ENCODE measurements at regions of chr5 and their contacts with region 1.

Region 1: GRCh38 chr5:79235634-79236363 is at the start of gene JMY:
- DNase-seq: peak; percentile 94
- H3K4me3 ChIP-seq: peak within 1 kb of the TSS; percentile 65 to 85 (median 74)
- H3K27ac ChIP-seq: peak within 1 kb of the TSS; percentile 85 to 96 (median 93)
- H3K4me1 ChIP-seq: peaks cover 0 to 37% (median 20%) of the 10 kb centered on the region in 4 donors
- H3K27me3 ChIP-seq: no peaks in the 10 kb centered on the region
- CTCF ChIP-seq: no peak
- EP300 ChIP-seq: peak in 2 of 4 donors; percentile 6 to 32
- POLR2A ChIP-seq: peak; percentile 21 to 42
- total RNA-seq, gene JMY: 33.2 to 58.7 (median 39.2) TPM

Region 2: DNA sequence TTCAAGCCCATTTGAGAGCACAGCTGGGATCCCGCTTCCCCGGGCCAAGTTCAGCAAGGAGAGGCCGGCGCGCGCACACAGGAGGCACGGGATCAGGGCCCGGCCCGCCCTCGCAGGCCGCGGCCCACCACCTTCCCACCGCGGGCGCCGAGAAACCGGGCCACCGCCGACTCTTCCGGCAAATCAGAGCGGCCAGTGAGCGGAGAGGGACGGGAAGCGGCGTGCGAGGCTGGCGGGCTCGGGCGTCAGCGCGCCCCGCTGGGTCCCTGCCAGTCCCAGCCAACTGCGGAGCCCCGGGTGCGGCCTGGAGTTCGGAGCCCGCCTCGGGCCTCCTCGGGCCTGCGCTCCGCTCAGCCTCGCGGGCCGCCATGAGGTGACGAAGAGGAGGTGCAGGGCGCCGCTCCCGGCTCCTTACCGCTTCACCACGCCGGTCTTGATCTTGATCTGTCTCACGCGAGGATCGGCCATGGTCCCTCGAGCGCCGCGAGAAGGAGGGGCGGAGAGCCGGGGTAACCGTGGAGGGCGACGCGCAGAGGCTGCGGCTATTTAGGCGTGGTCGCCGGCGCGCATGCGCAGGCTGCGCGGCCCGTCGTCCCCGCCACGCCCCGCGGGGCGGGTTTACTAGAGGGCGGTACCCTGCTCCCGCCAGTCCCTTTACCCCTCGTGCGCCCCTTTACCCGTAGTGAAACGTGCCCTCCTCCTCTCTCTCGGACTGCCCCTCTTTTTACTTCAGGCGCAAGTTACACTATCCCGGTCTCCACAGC is 1459.8 kb before region 1 on chr5 and contains the start of gene TBCA:
- intact Hi-C with region 1: loop called (anchors 10 kb)
- DNase-seq: peak; percentile 93
- H3K4me3 ChIP-seq: peak within 1 kb of the TSS; percentile 56 to 75 (median 71)
- H3K27ac ChIP-seq: peak within 1 kb of the TSS; percentile 94 to 98 (median 96)
- H3K4me1 ChIP-seq: peaks cover 0 to 49% (median 38%) of the 10 kb centered on the region in 4 donors
- H3K27me3 ChIP-seq: no peaks in the 10 kb centered on the region
- CTCF ChIP-seq: peak in 2 of 4 experiments; percentile 20 to 26
- EP300 ChIP-seq: no peak
- POLR2A ChIP-seq: peak; percentile 77 to 80
- total RNA-seq, gene TBCA: 192 to 231 (median 214) TPM

Region 3: DNA sequence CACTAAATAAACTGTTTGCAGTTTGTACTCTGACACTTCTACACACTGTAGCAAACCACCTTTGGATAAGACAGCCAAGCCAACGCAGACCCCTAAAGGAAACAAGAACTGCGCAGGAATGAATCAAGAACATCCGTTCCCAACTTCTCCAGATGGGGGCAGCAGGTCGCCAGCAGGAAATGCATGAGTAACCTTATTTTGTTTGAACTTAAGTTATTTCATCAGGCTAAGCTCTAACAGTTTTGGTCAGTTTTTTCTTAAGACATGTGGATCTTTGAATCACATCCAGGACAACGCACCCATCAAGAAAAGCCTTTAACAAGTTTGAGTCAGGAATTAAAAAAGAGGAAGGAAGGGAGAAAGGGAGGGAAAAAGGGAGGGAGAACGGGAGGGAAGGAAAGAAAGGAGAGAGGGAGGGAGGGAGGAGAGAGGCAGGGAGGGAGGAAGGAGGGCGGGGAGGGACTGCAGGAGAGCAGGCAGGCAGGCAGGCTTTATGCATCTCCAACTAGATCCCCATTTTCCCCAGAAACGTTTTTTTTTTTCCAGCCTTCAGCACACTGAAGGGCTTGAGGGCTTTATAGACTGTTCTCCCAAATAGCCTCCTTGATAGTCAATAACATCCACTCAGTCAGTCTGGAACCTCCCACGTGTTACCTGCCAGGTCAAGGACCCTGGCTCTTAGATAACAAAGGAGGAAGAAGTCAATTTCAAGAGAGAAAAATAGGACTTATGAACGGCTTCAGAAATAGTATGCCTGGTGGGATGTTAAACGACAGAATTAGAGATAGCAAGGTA is 101.9 kb before region 1 on chr5:
- intact Hi-C with region 1: loop called (anchors 2 kb)
- DNase-seq: peak; percentile 86
- H3K4me3 ChIP-seq: peak overlapping the region; percentile 9 to 42 (median 33)
- H3K27ac ChIP-seq: peak overlapping the region; percentile 68 to 85 (median 83)
- H3K4me1 ChIP-seq: peaks cover 0 to 21% (median 6%) of the 10 kb centered on the region in 4 donors
- H3K27me3 ChIP-seq: no peaks in the 10 kb centered on the region
- CTCF ChIP-seq: peak; percentile 69 to 85 (median 76)
- EP300 ChIP-seq: no peak
- POLR2A ChIP-seq: no peak

Region 4: DNA sequence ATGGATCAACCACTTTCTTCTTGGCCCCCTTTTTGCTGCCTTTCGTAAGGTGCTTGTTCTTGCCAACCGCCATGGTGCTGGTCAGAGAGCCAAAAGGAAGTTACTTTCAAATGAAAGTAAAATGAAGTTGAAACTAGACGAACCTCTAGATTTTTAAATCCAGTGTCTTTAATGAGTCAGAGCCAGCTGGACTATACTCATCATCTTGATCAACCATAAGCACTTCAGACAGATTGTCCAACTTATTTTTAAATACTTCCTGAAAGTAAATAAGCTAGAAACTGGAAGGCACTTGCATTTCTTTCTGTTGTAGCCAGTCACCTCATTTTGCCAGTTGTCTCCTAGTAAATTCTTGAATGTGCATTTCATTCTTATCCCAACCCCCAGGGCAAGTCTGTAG is 49.0 kb after region 1 on chr5:
- intact Hi-C with region 1: loop called (anchors 5 kb)
- DNase-seq: no peak
- H3K4me3 ChIP-seq: no peak overlapping the region
- H3K27ac ChIP-seq: peak overlapping the region in 3 of 4 donors; percentile 34 to 57 (median 40)
- H3K4me1 ChIP-seq: peaks cover 0 to 43% (median 2%) of the 10 kb centered on the region in 4 donors
- H3K27me3 ChIP-seq: no peaks in the 10 kb centered on the region
- CTCF ChIP-seq: no peak
- EP300 ChIP-seq: no peak
- POLR2A ChIP-seq: no peak

Region 5: DNA sequence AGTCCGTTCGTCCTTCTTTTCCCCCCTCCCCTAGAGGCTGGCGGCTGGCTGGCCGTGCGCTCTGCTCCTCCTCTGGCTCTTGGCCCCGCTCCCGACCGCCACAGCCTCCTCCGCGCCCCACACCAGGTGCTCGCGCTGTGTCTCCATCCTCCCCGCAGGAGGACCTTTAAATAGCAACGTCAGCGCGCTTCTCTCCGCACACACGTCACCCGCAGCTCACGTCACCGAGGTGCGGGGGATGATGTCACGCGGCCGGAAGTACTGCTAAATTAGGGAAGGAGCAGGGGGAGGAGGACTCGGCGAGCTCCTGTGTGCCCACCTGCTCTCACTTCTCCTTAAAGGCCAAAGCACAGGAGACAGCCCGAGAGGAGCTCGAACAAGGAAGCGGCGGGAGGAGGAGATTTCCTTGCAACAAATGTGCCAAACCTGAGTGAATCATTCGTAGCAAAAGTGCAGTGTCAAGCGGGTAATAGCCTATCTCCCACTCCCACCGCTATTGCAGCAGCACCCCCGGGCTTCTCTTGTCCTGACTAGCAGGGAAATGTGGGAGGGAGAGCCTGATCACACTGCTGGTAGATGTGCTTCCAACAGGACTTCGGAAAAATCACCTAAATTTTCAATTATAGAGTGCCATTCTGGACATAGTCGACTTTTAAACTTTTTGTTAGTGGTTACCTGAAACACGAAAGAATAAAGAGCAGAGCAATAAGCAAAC is 278.7 kb after region 1 on chr5:
- intact Hi-C with region 1: loop called (anchors 2 kb)
- DNase-seq: peak; percentile 97
- H3K4me3 ChIP-seq: peak overlapping the region; percentile 79 to 99 (median 91)
- H3K27ac ChIP-seq: peak overlapping the region; percentile 94 to 100 (median 97)
- H3K4me1 ChIP-seq: peaks cover 0 to 38% (median 16%) of the 10 kb centered on the region in 4 donors
- H3K27me3 ChIP-seq: no peaks in the 10 kb centered on the region
- CTCF ChIP-seq: no peak
- EP300 ChIP-seq: peak in 1 of 4 donors; percentile 60
- POLR2A ChIP-seq: peak; percentile 76 to 77

Measured in sigmoid colon (tissue), 7 donors.